HepG2 (cell line): ENCODE measurements at regions of chr16 and their contacts with region 1.

Region 1: DNA sequence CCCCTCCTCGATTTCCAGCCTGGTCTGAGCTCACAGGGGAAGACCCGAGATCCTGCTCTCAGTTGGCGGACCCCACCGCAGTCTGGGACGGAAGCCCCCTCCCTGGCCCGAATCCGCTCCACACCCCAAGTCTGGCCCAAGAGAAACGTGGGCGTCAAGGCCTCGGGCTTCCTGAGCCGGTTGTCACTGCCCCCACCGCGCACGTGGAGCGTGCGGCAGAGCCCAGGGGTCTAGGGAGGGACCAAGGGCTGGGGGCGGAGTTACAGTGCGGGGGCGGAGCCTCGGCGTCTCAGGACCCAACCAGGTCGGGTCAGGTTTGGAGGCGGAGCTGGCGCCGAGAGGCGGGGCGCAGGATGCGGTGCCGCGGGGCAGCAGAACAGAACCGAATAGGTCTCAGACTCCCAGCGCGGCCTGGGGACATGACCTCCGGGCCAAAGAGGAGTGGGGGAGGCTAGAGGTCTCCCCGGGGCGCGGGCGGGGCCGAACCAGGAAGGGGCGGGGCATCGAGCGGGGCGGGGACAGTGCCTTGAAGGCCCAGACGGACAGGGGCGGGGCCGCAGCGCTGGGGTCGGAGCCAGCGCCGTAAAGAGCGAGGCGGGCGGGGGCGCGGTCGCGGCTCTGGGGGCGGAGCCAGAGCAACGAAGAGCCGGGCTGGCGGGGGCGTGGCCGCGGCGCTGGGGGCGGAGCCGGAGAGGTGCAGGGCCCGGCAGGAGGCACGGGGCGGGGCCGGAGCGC is 431 bp upstream of the ZFPM1 start:
- DNase-seq: peak; percentile 92
- ATAC-seq: peak; percentile 76
- H3K4me3 ChIP-seq: peak overlapping the region; percentile 64 to 77 (median 76); a peak in 4 of 6 replicates
- H3K27ac ChIP-seq: peak overlapping the region; percentile 51
- H3K4me1 ChIP-seq: peaks cover 26% of the 10 kb centered on the region
- H3K27me3 ChIP-seq: peaks cover 8 to 45% of the 10 kb centered on the region in 2 experiments; a peak in 4 of 5 replicates
- CTCF ChIP-seq: no peak
- EP300 ChIP-seq: no peak
- POLR2A ChIP-seq: no peak
- RAD21 ChIP-seq: no peak

Region 2: DNA sequence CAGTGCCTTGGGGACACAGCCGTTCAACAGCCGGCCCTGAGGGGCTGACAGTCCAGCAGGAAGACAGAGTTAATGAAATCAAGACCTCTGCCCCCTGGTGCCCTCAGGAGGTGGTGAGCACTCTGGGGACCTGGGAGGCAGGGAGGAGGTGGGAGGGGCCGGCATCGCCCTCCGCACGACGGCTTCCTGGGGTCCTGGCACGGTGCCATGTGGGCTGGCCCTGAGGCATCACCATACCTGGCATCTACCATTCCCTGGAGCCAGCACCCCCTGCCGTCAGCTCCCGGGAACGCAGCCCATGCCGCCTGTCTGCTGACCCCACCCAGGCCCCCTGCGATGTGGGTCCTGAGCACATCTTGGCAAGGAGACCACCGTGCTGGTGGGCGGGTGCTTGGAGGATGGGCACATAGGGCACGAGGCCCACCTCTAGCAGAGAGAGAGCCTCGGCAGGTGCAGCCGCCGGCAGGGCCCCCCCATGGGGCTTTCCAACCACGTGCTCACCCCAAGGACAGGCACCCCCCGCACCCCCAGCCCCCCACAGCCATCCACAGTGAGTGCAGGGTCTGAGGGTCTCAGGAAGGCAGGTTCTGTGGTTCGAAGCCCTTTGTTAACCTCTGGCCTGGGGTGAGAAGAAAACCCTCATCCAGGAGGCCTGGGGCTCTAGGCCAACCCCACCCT is 52.9 kb after region 1 on chr16:
- CTCF ChIA-PET with region 1: interaction called, 5 read pairs
- POLR2A ChIA-PET with region 1: interaction called, 31 read pairs
- in situ Hi-C with region 1: loop called (anchors 10 kb)
- intact Hi-C with region 1: loop called (anchors 5 kb)
- DNase-seq: peak; percentile 79
- ATAC-seq: peak; percentile 21
- H3K4me3 ChIP-seq: peak overlapping the region; percentile 19 to 56 (median 32); a peak in 4 of 6 replicates
- H3K27ac ChIP-seq: peak overlapping the region; percentile 92
- H3K4me1 ChIP-seq: peaks cover 75% of the 10 kb centered on the region
- H3K27me3 ChIP-seq: no peaks in the 10 kb centered on the region
- CTCF ChIP-seq: peak; percentile 82
- EP300 ChIP-seq: no peak
- POLR2A ChIP-seq: no peak
- RAD21 ChIP-seq: peak; percentile 86

Region 3: DNA sequence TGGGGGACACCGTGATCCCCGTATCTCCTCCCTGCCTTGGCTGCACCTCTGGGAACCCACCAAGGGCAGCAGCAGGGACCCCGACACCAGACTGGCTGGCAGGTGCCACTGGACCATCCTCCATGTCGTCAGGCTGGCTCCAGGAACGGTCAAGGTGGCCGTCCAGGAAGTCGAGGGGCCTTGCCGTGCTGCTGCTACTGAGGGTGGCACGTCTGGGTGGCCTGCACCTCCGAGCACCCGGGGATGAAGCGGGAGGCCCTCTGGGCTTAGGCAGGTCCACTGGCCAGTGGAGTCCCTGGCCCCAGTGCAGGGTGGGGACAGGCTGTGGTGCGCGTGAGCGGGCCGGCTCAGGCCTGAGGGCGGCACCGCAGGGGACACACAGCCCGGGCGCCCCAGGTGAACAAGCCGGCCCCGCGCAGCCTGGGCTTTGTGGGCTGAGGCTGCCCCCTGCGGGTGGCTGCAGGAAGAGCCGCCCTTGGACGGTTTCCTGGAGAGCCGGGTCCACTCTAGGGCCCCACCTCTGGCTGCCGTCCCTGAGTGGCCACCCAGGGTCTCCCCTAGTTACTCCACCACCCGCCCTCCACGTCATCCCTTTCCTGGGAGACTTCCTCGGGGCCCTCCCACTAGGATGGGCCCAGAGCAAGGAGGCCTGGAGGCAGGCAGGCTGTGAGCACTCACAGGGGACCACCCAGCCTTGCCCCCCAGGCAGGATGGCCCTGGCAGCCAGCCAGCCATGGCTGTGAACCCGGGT is 74.7 kb after region 1 on chr16:
- CTCF ChIA-PET with region 1: interaction called, 5 read pairs
- POLR2A ChIA-PET with region 1: no interaction called
- in situ Hi-C with region 1: no loop called
- intact Hi-C with region 1: loop called (anchors 1 kb)
- DNase-seq: peak; percentile 51
- ATAC-seq: peak; percentile 79
- H3K4me3 ChIP-seq: no peak overlapping the region
- H3K27ac ChIP-seq: no peak overlapping the region
- H3K4me1 ChIP-seq: peaks cover 31% of the 10 kb centered on the region
- H3K27me3 ChIP-seq: no peaks in the 10 kb centered on the region
- CTCF ChIP-seq: peak; percentile 97
- EP300 ChIP-seq: peak in 1 of 2 experiments; percentile 12; a peak in 1 of 4 replicates
- POLR2A ChIP-seq: no peak
- RAD21 ChIP-seq: peak; percentile 100